ENCODE measurements at regions of chr22 and their contacts with region 1.

Region 1: DNA sequence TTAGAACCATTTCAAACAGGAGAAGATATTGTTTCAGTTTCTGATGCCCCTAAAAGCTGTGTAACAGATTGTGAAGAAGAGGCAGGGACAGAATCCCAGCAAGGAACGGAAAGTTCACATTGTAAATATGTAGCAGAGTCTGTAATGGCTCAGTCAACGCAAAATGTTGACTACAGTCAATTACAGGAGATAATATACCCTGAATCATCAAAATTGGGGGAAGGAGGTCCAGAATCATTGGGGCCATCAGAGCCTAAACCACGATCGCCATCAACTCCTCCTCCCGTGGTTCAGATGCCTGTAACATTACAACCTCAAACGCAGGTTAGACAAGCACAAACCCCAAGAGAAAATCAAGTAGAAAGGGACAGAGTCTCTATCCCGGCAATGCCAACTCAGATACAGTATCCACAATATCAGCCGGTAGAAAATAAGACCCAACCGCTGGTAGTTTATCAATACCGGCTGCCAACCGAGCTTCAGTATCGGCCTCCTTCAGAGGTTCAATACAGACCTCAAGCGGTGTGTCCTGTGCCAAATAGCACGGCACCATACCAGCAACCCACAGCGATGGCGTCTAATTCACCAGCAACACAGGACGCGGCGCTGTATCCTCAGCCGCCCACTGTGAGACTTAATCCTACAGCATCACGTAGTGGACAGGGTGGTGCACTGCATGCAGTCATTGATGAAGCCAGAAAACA is 40.8 kb downstream of the IGLL1 start:
- DNase-seq: peak; percentile 50
- ATAC-seq: peak; percentile 100
- H3K4me3 Mint-ChIP-seq: peak overlapping the region; percentile 30
- H3K27ac Mint-ChIP-seq: no peak overlapping the region
- H3K4me1 Mint-ChIP-seq: peaks cover 24% of the 10 kb centered on the region
- H3K27me3 Mint-ChIP-seq: no peaks in the 10 kb centered on the region
- CTCF ChIP-seq: peak; percentile 40

Region 2: DNA sequence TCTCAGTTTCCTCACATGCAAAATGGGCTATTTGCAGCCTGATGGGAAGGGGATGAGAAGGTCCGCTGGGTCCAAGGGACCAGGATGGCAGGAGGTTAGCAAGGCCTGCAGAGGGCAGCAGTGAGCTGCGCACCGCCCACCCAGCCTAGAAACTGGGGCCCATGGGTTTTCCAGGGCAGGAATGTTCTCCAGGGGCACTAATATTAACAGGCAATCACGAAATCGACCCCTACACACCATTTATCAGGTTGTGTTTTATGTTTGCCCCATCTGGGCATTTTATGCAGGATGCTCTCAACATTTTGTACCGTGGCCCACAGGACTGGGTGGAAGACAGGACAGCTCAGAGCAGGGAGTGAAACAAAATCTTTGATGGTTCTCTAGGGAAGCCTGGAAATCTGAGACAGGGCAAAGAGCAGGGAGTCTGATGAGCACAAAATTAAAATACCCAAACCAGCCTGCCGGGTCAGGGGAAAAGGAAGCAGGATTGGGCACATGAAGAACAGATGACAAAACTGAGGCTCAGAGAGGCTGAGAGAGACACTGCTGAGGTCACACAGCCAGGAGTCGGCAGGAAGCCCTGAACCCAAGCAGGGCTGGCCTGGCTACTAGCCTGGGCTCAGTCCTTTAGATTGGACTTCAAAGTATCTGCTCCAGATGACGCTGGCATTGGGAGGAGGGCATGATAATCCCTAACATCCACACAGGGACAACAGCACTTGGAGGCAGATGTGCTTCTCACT is 360.6 kb before region 1 on chr22:
- CTCF ChIA-PET with region 1: no interaction called
- POLR2A ChIA-PET with region 1: no interaction called
- intact Hi-C with region 1: loop called (anchors 2 kb)
- DNase-seq: peak; percentile 56
- ATAC-seq: peak; percentile 28
- H3K4me3 Mint-ChIP-seq: peak overlapping the region; percentile 46
- H3K27ac Mint-ChIP-seq: peak overlapping the region; percentile 19
- H3K4me1 Mint-ChIP-seq: peaks cover 51% of the 10 kb centered on the region
- H3K27me3 Mint-ChIP-seq: peaks cover 3% of the 10 kb centered on the region
- CTCF ChIP-seq: peak; percentile 87

Region 3: DNA sequence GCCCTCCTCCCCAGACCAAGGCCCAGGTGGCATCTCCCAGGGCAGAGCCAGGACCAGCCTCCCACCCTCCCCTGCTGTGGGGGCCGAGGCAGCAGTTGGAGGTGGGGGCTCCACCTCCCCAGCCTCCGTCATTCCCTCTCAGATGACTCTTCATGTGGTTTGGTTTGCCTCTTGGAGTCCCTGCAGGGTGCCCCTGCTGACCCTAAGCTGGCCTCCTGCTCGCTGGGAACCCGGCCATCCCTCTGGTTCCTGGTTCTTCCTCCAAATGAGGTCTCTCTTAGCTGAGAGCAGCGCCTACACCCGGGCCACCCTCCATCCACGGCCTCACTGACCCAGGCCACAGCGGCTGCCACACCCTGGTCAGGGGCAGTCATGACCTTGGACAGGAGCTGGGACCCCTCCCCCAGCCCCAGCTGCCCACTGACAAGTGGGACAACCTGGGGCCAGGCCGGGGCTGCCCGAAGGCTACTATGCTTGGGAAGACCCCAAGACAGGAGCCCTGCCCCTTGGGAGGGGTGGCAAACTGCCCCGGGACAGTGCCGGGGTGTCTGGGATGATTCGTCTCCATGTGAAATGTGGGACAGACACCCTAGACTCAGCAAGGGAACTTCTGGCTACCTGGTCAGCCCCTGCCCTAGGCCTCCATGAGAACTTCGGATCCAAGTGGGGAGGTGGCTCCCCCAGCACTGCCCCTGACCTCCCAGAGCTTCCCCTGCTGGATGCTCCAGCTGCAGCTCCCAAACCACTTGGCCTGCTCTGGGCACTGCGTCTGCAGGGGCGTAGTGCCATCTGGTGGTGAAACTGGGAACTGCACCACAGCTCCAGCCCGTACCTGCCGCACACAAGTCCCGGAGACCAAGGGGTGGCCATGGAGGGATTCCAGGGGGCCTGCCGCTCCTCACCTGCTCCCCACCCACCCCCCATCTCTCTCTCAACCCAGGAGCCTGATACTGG is 153.7 kb before region 1 on chr22:
- CTCF ChIA-PET with region 1: no interaction called
- POLR2A ChIA-PET with region 1: no interaction called
- intact Hi-C with region 1: loop called (anchors 1 kb)
- DNase-seq: peak; percentile 80
- ATAC-seq: peak; percentile 87
- H3K4me3 Mint-ChIP-seq: no peak overlapping the region
- H3K27ac Mint-ChIP-seq: no peak overlapping the region
- H3K4me1 Mint-ChIP-seq: no peaks in the 10 kb centered on the region
- H3K27me3 Mint-ChIP-seq: peaks cover 14% of the 10 kb centered on the region
- CTCF ChIP-seq: peak; percentile 92

Region 4: GRCh38 chr22:23402275-23403151 is 136.8 kb before region 1 on chr22:
- CTCF ChIA-PET with region 1: no interaction called
- POLR2A ChIA-PET with region 1: no interaction called
- intact Hi-C with region 1: loop called (anchors 1 kb)
- DNase-seq: peak; percentile 55
- ATAC-seq: peak; percentile 96
- H3K4me3 Mint-ChIP-seq: peak overlapping the region; percentile 58
- H3K27ac Mint-ChIP-seq: no peak overlapping the region
- H3K4me1 Mint-ChIP-seq: no peaks in the 10 kb centered on the region
- H3K27me3 Mint-ChIP-seq: no peaks in the 10 kb centered on the region
- CTCF ChIP-seq: no peak

Region 5: DNA sequence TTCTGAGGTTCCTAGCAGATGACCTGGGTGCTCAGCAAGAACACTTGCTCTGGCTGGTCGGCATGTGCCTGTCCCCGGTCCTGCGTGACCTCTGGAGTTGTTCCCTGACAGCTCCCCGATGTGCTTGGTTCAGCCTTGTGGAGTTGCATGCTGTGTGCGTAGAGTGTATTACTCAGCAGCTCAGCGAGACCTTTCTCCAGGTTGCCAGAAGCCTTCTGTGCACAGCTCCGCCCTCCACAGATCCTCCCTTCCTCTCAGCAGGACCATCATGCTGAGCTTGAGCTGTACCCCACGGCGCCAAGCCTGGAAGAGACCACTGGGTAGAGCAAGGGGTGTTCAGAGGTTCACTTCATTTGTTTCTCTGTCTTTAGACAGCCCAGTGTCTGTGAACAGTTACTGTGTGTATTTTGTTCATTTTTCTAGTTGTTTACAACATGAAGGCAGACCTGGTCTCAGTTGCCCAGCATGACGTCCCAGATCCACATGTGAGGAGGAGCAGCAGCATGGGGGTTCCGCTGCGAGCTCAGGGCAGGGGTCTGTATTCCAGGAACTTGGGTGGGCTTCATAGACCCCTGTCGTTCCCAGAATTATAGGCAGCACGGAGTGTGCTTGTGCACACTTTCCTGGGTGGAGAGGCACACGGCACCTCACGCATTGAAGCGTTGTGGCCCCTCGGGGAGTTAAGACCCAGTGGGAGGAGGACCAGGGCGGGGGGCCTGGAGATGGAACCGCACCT is 107.8 kb before region 1 on chr22:
- CTCF ChIA-PET with region 1: no interaction called
- POLR2A ChIA-PET with region 1: no interaction called
- intact Hi-C with region 1: no loop called
- DNase-seq: no peak
- ATAC-seq: no peak
- H3K4me3 Mint-ChIP-seq: no peak overlapping the region
- H3K27ac Mint-ChIP-seq: no peak overlapping the region
- H3K4me1 Mint-ChIP-seq: peaks cover 14% of the 10 kb centered on the region
- H3K27me3 Mint-ChIP-seq: peaks cover 2% of the 10 kb centered on the region
- CTCF ChIP-seq: no peak

Region 6: GRCh38 chr22:23495614-23496444 is 43.5 kb before region 1 on chr22:
- CTCF ChIA-PET with region 1: no interaction called
- POLR2A ChIA-PET with region 1: no interaction called
- intact Hi-C with region 1: no loop called
- DNase-seq: no peak
- ATAC-seq: no peak
- H3K4me3 Mint-ChIP-seq: no peak overlapping the region
- H3K27ac Mint-ChIP-seq: no peak overlapping the region
- H3K4me1 Mint-ChIP-seq: no peaks in the 10 kb centered on the region
- H3K27me3 Mint-ChIP-seq: peaks cover 5% of the 10 kb centered on the region
- CTCF ChIP-seq: no peak

Region 7: GRCh38 chr22:23509571-23510305 is 29.5 kb before region 1 on chr22:
- CTCF ChIA-PET with region 1: no interaction called
- POLR2A ChIA-PET with region 1: no interaction called
- intact Hi-C with region 1: no loop called
- DNase-seq: no peak
- ATAC-seq: no peak
- H3K4me3 Mint-ChIP-seq: no peak overlapping the region
- H3K27ac Mint-ChIP-seq: no peak overlapping the region
- H3K4me1 Mint-ChIP-seq: peaks cover 1% of the 10 kb centered on the region
- H3K27me3 Mint-ChIP-seq: peaks cover 13% of the 10 kb centered on the region
- CTCF ChIP-seq: no peak

Region 8: DNA sequence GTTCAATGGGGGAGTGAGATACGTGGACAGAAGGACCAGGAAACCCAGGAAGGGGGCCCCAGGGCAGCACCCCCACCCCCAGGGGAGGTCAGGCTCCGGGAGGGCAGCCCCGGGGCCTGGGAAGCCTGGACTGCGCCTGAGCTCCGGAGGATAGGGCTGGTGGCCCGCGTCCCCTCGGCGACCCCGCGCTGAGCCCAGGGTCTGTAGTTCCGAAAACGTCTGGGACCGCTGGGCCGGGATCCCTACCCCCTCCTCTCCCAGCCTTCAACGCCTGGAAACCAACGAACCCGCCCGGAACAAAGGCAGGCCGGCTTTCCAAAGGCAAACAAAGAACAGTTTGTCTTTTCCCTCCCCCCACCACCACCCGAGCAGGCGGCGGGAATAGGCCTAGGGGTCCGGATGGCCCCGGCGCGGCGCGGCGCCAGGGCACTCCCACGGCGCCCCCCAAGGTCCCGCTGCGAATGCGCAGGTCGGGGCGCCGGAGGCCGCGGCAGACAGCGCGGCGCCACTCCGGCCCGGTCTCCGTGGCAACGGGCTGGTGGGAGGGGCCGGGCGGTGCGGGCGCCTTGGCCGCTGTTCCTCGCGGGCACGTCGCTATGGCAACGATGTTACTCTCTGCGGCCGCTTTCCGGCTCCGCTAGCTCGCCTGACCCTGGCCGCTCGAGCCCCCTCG is 17.7 kb before region 1 on chr22:
- CTCF ChIA-PET with region 1: no interaction called
- POLR2A ChIA-PET with region 1: no interaction called
- intact Hi-C with region 1: loop called (anchors 1 kb)
- DNase-seq: peak; percentile 80
- ATAC-seq: peak; percentile 94
- H3K4me3 Mint-ChIP-seq: peak overlapping the region; percentile 69
- H3K27ac Mint-ChIP-seq: no peak overlapping the region
- H3K4me1 Mint-ChIP-seq: peaks cover 6% of the 10 kb centered on the region
- H3K27me3 Mint-ChIP-seq: peaks cover 13% of the 10 kb centered on the region
- CTCF ChIP-seq: no peak

Region 9: DNA sequence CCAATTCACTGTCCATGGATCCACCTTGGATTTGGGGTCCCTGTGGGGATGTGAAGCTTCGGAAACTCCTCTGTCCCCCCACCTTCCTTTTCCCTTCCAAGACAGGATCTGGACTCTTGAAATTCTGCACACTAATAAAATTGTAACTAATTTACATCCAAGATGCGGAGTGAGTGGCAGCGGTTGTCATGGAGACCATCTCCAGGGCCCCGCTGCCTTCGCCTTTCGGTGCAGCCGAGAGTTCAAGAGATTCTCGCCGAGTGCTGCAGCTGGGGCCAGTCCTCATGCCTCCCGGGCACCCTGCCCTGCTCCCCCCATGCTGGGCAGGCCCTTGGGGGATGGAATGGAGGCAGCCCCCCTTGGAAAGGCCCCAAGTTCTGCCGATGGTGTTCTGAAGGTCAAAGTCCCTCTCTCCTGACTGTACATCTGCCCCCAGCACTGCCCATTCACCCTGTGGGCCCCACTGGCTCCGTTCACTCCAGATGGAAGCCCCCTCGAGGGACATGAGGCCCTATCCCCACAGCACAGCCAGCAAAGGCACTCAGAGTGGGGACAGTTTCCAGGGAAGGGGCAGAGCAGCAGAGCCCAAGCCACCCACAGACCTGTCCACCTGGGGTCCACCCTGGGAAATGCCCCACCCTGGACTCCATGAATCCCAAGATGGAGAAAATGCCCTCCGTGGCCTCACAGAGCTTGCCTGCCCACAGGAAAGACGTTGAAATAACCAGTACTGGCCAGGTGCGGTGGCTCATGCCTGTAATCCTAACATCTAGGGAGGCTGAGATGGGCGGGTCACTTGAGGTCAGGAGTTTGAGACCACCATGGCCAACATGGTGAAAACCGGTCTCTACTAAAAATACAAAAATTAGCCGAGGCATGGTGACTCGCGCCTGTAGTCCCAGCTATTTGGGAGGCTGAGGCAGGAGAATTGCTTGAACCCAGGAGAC is 14.9 kb after region 1 on chr22:
- CTCF ChIA-PET with region 1: no interaction called
- POLR2A ChIA-PET with region 1: no interaction called
- intact Hi-C with region 1: no loop called
- DNase-seq: no peak
- ATAC-seq: no peak
- H3K4me3 Mint-ChIP-seq: no peak overlapping the region
- H3K27ac Mint-ChIP-seq: no peak overlapping the region
- H3K4me1 Mint-ChIP-seq: no peaks in the 10 kb centered on the region
- H3K27me3 Mint-ChIP-seq: peaks cover 14% of the 10 kb centered on the region
- CTCF ChIP-seq: no peak

Region 10: GRCh38 chr22:23574371-23574811 is 35.1 kb after region 1 on chr22:
- CTCF ChIA-PET with region 1: no interaction called
- POLR2A ChIA-PET with region 1: interaction called, 13 read pairs
- intact Hi-C with region 1: no loop called
- DNase-seq: no peak
- ATAC-seq: no peak
- H3K4me3 Mint-ChIP-seq: no peak overlapping the region
- H3K27ac Mint-ChIP-seq: no peak overlapping the region
- H3K4me1 Mint-ChIP-seq: peaks cover 10% of the 10 kb centered on the region
- H3K27me3 Mint-ChIP-seq: peaks cover 16% of the 10 kb centered on the region
- CTCF ChIP-seq: no peak

Region 11: DNA sequence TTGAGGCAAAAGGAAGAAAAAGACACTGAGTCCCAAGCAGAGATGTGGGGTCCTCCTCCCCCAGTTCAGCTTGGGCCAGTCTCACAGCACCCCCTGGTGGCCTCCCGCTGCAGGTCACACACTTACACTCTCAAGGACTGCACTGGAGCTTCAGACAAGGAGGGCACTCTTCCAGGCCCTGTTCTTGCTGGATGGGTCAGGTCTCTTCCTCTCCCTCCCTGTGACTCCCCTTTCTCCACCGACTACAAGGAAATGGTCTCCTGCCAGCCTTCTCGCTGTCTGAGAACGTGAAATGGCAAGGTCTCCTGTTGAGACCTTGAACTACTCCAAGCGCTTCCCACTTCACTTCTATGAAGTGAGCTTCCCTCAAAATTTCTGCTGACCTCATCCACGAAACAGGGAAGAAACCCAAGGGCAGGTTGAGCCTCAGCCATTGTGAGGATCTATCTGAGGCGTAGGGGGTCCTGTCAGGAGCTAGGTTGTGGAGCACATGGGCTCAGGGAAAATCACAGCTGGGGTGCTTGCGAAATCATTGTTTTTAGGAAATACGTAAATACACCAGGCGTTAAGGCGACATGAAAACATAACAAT is 52.0 kb after region 1 on chr22:
- CTCF ChIA-PET with region 1: interaction called, 9 read pairs
- POLR2A ChIA-PET with region 1: no interaction called
- intact Hi-C with region 1: loop called (anchors 1 kb)
- DNase-seq: peak; percentile 56
- ATAC-seq: peak; percentile 69
- H3K4me3 Mint-ChIP-seq: no peak overlapping the region
- H3K27ac Mint-ChIP-seq: no peak overlapping the region
- H3K4me1 Mint-ChIP-seq: no peaks in the 10 kb centered on the region
- H3K27me3 Mint-ChIP-seq: peaks cover 2% of the 10 kb centered on the region
- CTCF ChIP-seq: no peak